Mucosa of descending colon (tissue), 3 donors: ENCODE measurements at regions of chr5 and their contacts with region 1.

Region 1: DNA sequence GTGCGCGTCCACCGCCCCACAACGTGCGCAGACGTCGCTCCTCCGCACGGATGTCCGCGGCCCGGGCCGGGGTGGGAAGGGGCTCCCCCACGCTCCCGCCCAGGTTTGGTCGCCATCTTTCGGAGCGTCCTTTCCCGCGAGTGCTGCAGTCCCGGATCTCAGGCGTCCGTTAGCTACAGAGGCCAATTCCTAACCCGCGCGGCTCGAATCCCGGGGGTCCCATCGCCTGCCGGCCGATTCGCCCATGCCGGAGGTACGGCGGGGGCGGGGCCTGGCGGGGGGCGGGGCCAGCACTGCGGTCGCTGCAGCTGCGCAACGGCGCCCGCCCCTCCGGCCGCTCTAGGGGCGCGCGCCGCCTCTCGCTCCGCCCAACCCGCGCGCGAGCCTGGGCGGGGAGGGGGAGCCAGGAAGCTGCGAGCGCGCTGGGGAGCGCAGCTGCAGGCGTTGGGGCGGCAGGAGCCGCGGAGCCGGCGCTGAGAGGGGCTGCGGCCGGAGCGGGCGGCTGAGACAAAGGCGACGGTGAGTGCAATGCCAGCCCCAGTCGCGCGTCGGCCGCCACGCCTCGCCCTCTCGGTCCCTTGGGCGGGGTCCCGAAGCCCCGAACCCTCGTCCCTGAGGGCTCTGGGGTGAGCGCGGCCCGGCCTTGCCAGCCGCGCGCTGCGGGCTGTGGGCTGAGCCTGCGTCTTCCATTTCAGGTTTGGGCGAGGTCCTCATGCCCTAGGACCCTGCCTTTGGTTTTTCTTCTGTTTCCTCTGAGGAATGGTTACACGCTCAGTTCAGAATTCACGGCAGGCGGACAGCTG is at the start of gene CDC42SE2:
- DNase-seq: peak; percentile 90 to 93 (median 92)
- ATAC-seq: peak; percentile 96
- H3K4me3 ChIP-seq: peak within 1 kb of the TSS; percentile 77
- H3K4me1 ChIP-seq: peaks cover 17% of the 10 kb centered on the region
- CTCF ChIP-seq: no peak
- total RNA-seq, gene CDC42SE2: 60.5 to 116 (median 101) TPM

Region 2: DNA sequence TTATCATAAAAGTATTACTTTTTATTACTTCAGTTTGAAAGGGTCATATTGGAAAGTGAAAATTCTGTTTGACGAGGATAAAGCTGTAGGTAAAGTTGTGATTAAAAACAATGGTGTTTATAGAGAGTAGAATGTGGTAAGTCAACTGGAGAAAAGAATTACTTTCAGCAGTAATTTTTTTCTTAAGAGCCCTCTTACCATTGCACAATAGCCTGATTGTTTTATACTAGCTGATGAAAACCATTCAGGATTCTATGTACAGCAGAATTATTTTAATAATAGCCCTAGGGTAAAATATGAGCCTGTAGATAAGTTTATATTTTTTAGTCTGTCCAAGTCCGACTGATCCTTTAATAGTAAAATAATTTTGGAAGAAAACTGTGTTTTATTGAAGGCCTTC is 16.6 kb after region 1 on chr5:
- intact Hi-C with region 1: loop called in 1 of 2 experiments (anchors 1 kb)
- DNase-seq: no peak
- ATAC-seq: no peak
- H3K4me3 ChIP-seq: no peak overlapping the region
- H3K4me1 ChIP-seq: peaks cover 49% of the 10 kb centered on the region
- CTCF ChIP-seq: no peak

Region 3: GRCh38 chr5:131382407-131383395 is 118.9 kb after region 1 on chr5:
- intact Hi-C with region 1: loop called in 1 of 2 experiments (anchors 10 kb)
- DNase-seq: peak in 1 of 3 donors; percentile 40
- ATAC-seq: peak; percentile 90
- H3K4me3 ChIP-seq: no peak overlapping the region
- H3K4me1 ChIP-seq: peaks cover 30% of the 10 kb centered on the region
- CTCF ChIP-seq: no peak